Sciatic nerve (tissue), 2 donors: ENCODE measurements at regions of chr13 and their contacts with region 1.

Region 1: DNA sequence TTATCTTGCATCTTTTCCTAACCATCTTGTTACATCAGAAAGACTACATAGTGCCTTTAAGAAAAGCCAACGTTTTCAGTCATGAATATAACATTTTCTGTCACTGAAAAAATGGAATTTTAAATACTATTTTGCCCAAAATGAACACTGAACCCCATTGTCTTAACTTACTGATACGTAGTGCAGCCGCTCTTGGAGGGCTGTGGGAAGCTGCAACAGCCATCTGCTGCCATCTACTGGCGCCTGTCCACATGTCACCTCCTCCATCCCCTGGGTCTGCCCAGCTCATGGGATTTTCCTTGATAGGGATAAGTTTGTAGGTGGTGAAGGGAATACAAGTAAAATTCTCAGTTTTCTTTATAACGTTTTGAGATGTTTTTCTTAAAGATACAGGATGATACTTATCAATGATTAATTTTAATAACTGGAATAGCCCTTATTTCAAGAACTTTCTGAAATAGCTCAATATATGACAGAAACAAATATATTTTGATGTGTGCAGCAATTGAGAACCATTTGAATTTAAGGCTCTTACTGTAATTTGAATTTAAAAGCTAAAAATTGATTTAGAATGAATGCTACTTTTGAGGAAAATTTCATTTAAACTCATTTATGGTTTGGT is 73.7 kb downstream of the GGACT start:
- DNase-seq: peak; percentile 88
- ATAC-seq: peak; percentile 96

Region 2: GRCh38 chr13:99916366-99917103 is 598.4 kb before region 1 on chr13:
- intact Hi-C with region 1: loop called (anchors 10 kb)
- DNase-seq: no peak
- ATAC-seq: peak; percentile 65

Region 3: GRCh38 chr13:100497389-100497788 is 17.5 kb before region 1 on chr13:
- intact Hi-C with region 1: no loop called
- DNase-seq: no peak
- ATAC-seq: no peak

Region 4: DNA sequence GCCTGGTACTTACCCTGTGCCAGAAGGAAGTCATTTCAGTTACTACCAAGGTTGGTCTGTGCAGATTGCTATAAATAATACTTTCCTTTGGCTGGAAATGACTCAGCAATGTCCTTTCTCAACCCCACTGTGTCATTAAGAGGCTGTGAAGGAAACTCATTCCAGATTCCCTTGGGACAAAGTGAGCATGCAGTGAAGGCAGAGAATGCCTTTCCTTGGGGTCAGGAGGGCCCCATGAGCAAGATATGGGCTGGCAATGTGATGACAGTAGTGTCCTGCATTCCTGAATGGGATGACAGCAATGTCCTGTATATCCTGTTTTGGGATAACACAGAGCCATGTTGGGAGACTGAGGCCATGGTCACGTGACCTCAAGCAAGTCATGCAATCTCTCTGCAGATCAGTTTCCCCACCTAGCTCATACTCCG is 372.8 kb after region 1 on chr13:
- intact Hi-C with region 1: no loop called
- DNase-seq: no peak
- ATAC-seq: no peak